Stomach (tissue), 19 donors: ENCODE measurements at regions of chr16 and their contacts with region 1.

Region 1: DNA sequence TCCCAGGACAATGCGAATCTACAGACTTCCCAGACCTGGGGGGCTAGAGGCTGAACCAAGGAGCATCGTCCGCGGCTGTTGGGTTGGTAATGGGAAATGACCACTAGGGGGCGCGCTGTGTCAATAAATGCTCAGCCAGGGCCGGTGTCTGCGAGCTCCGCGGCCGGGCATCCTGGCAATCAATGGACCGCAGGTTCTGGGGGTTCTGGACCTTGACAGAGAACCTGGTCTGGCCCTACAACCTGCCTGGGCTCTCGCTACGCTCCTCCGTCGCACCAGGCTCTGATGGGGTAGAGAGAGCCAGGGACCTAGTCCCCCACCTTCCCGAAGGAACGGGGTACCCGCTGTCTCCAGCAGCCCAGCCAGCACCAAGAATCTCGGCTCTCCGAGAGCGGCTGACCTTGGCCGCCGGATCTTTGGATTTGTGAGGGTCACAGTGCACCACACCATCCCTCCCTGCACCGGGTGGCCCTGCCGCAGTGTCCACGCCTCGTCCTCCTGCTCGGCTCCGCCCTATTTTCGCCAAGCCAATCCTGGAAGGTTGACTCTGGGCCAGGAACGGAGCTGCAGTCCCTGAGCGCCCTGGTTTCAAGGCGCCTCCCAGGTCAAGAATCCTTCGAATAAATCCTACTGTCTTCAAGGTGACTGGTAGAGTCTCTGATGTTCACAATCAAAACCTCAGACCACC is 20.4 kb upstream of the BEAN1 start:
- DNase-seq: peak; percentile 89 to 92
- H3K4me3 ChIP-seq: peak overlapping the region; percentile 41 to 59 (median 51)
- H3K27ac ChIP-seq: peak overlapping the region in 2 of 5 donors; percentile 34 to 44
- H3K4me1 ChIP-seq: peaks cover 6 to 20% (median 9%) of the 10 kb centered on the region in 4 donors
- H3K27me3 ChIP-seq: peaks cover 0 to 49% (median 0%) of the 10 kb centered on the region in 3 donors
- CTCF ChIP-seq: peak in 5 of 7 experiments; percentile 70 to 96 (median 89)
- EP300 ChIP-seq: no peak
- POLR2A ChIP-seq: no peak

Region 2: GRCh38 chr16:66315210-66315825 is 91.4 kb before region 1 on chr16:
- intact Hi-C with region 1: no loop called
- DNase-seq: peak; percentile 69 to 91
- H3K4me3 ChIP-seq: no peak overlapping the region
- H3K27ac ChIP-seq: no peak overlapping the region
- H3K4me1 ChIP-seq: peaks cover 0 to 10% (median 4%) of the 10 kb centered on the region in 4 donors
- H3K27me3 ChIP-seq: no peaks in the 10 kb centered on the region
- CTCF ChIP-seq: peak in 5 of 7 experiments; percentile 73 to 97 (median 96)
- EP300 ChIP-seq: no peak
- POLR2A ChIP-seq: no peak

Region 3: DNA sequence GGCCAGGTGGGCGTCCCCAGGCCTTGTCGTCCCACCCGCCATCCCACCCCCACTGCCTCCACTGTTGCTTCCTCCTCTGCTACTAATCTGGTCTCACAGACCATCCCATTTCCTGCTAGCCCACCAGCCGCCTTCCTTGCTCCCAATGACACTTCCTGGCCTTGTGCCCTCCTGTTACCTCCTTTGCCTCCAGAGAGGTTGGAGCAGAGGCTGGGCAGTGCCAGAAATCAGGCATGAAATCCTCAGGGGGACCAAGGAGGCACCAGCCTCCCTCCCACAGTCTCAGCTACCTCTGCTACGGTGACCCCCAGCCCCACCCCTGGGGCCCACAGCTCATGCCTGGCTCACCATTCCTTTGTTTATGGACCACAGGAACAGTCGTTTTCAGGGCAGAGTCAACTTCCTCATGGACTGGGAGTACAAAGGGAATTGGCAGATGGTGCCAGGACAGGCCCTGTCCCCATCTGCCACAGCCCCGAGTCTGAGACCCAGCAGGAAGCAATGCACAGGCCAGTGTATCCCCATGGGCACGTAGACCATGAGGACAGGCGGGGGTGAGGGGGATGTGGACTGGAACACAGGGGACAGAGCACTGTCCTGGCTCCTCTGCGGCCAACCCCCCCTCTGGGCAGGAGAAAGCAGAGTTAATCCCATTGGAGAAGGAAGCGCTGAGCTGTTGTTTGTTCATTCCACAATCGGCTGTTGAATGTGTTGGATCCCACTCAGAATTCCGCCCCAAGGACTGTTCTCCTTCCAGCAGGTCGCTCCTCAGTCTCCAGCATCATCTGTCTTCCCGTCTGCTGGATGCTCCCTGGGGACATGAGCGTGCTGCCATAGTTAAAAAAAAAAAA is 42.3 kb before region 1 on chr16:
- intact Hi-C with region 1: no loop called
- DNase-seq: peak in 1 of 2 donors; percentile 83
- H3K4me3 ChIP-seq: no peak overlapping the region
- H3K27ac ChIP-seq: peak overlapping the region in 3 of 5 donors; percentile 25 to 75 (median 70)
- H3K4me1 ChIP-seq: peaks cover 3 to 25% (median 8%) of the 10 kb centered on the region in 4 donors
- H3K27me3 ChIP-seq: peaks cover 0 to 70% (median 8%) of the 10 kb centered on the region in 3 donors
- CTCF ChIP-seq: no peak
- EP300 ChIP-seq: no peak
- POLR2A ChIP-seq: no peak

Region 4: GRCh38 chr16:66483689-66484481 is 77.2 kb after region 1 on chr16:
- intact Hi-C with region 1: loop called (anchors 5 kb)
- DNase-seq: peak; percentile 76 to 91
- H3K4me3 ChIP-seq: no peak overlapping the region
- H3K27ac ChIP-seq: no peak overlapping the region
- H3K4me1 ChIP-seq: peaks cover 4 to 27% (median 17%) of the 10 kb centered on the region in 4 donors
- H3K27me3 ChIP-seq: no peaks in the 10 kb centered on the region
- CTCF ChIP-seq: peak in 5 of 7 experiments; percentile 83 to 92 (median 89)
- EP300 ChIP-seq: no peak
- POLR2A ChIP-seq: no peak

Region 5: DNA sequence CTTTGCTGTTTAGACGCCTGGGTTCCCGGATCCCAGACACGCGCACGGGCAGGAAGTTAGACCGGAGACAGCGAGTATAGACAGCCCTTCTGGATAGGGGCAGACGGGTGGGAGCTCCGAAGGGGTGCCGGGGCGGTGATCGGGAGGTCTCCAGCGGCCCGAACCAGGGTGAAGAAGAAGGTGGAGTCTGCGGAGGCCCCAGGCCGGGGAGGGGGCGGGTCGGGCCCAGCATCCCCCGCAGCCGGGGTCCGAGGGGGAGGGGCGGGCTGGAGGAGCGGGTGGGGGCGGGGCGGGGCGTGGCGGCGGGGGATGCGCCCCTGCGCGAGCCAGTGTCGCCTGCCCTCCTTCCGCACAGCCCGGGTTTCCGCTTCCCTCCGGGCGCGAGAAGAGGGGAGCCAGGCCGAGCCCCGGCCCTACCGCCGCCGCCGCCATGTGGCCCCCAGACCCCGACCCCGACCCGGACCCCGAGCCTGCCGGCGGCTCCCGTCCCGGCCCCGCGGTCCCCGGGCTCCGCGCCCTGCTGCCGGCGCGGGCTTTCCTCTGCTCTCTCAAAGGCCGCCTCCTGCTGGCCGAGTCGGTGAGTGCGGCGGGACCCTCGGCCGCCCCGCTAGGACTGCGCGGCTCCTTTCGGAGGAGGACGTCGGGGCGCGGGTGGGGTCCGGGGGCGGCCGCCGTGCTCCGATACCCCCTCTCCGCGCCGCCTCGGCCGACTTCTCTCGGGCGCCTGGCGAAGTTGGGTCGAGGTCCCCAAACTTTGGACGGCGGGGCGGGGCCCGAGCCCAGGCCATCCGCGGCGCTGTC is 197.9 kb after region 1 on chr16 and contains the start of gene CMTM3:
- intact Hi-C with region 1: loop called (anchors 5 kb)
- DNase-seq: peak; percentile 59 to 90
- H3K4me3 ChIP-seq: peak within 1 kb of the TSS; percentile 58 to 76 (median 67)
- H3K27ac ChIP-seq: peak within 1 kb of the TSS; percentile 76 to 92 (median 85)
- H3K4me1 ChIP-seq: peaks cover 32 to 60% (median 50%) of the 10 kb centered on the region in 4 donors
- H3K27me3 ChIP-seq: peaks cover 0 to 20% (median 7%) of the 10 kb centered on the region in 3 donors
- CTCF ChIP-seq: peak in 5 of 7 experiments; percentile 29 to 85 (median 64)
- EP300 ChIP-seq: no peak
- POLR2A ChIP-seq: no peak
- total RNA-seq, gene CMTM3: 0.87 to 10.3 (median 6.5) TPM in 3 of 5 donors, not detected in the others